WTC11 (cell line): ENCODE measurements at regions of chr1 and their contacts with region 1.

Region 1: DNA sequence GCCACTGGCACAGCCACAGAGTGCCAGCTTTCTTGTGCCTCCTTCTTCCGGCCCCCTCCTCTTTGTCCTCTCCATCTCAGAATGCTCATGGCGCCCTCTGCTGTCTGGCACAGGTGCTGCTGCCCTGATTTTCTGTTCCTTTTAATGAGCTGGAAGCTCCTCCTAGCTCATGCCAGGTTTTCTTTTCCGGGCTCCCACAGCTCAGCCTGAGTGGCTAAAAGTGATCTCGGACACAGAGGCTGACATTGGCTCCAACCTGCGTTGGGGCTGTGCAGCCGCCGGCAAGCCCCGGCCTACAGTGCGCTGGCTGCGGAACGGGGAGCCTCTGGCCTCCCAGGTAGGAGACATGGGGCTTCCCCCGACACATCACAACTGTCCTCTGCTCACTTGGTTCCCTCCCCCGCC is 18.7 kb downstream of the CNTN2 start:
- DNase-seq: peak; percentile 96
- ATAC-seq: peak; percentile 85
- H3K4me3 Mint-ChIP-seq: no peak overlapping the region
- H3K27ac Mint-ChIP-seq: no peak overlapping the region
- H3K4me1 Mint-ChIP-seq: peaks cover 9% of the 10 kb centered on the region; the same call in 1 of the 2 replicates
- H3K27me3 Mint-ChIP-seq: no peaks in the 10 kb centered on the region
- CTCF ChIP-seq: peak; percentile 84

Region 2: DNA sequence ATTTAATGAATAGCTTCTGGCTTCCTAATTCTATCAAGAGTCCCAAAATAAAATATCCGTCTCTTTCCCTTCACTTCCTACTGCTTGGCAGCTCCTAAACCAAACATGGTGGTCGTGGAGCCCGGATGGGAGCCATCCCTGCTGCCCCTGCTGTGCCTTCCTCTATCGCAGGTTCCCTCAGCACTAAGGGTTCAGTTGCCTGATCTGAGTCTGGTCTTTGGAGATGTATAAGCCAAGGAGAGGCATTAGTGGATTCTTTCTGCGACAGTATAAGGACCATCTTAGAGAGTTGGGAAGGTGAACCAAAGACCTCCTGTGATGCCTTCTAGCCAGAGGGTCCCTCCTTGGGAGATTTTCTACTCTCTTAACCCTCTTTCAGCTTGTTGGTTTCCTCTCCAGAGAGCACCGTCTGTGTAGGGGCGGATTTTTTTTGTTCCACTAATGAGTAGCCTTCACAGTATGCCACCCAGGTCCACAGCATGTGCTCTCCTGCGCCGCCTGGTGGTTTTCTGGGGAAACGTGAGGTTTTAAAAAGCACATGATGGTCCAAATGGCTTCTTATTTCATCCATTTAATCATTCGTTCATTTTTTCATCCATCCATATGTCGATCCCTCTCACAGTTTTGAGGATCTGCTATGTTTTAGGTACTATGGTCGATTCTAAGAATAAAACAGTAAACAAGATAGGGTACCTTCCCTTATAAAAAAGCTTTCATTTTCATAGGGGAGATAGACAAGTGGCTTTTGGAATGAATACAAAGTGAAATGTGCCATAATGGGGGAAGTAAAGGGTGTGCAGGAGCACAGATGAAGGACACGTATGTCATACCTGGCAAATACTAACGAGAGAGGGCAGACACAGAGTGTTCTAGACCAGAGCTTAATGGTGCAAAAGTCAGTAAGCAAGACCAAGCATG is 120.0 kb before region 1 on chr1:
- CTCF ChIA-PET with region 1: interaction called, 16 read pairs
- POLR2A ChIA-PET with region 1: no interaction called
- DNase-seq: peak; percentile 86
- ATAC-seq: peak; percentile 92
- H3K4me3 Mint-ChIP-seq: no peak overlapping the region
- H3K27ac Mint-ChIP-seq: no peak overlapping the region
- H3K4me1 Mint-ChIP-seq: peaks cover 7% of the 10 kb centered on the region; the same call in 1 of the 2 replicates
- H3K27me3 Mint-ChIP-seq: no peaks in the 10 kb centered on the region
- CTCF ChIP-seq: peak; percentile 93

Region 3: DNA sequence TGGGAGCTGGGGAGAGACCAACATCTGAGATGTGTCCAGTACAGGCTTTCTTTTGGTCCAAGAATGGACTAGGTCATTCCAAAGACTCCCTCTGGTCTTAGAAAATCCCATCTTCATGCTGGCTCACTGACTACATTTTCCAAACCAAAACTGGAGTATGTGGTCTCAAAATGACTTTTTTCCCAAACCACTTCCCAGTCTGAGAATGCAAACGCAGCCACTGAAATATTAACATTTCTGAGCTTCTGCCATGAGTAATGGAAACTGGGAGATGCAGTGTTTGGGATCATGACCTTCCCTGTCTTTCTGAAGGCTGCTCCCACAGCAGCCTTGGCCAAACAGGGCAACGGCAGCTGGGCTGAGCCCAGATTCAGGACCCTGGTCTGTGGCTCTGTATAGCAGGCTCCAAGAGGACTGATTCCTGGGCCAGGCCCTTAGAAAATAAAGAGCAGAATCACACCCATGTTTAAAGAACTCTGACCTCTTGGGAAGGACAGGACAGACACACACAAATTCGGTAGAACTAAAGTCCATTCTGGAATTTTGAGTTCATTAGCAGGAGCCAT is 80.7 kb before region 1 on chr1:
- CTCF ChIA-PET with region 1: interaction called, 72 read pairs
- POLR2A ChIA-PET with region 1: no interaction called
- DNase-seq: no peak
- ATAC-seq: no peak
- H3K4me3 Mint-ChIP-seq: no peak overlapping the region
- H3K27ac Mint-ChIP-seq: no peak overlapping the region
- H3K4me1 Mint-ChIP-seq: no peaks in the 10 kb centered on the region
- H3K27me3 Mint-ChIP-seq: no peaks in the 10 kb centered on the region
- CTCF ChIP-seq: no peak

Region 4: GRCh38 chr1:205032508-205032907 is 29.2 kb before region 1 on chr1:
- CTCF ChIA-PET with region 1: interaction called, 90 read pairs
- POLR2A ChIA-PET with region 1: no interaction called
- DNase-seq: no peak
- ATAC-seq: no peak
- H3K4me3 Mint-ChIP-seq: no peak overlapping the region
- H3K27ac Mint-ChIP-seq: no peak overlapping the region
- H3K4me1 Mint-ChIP-seq: peaks cover 5% of the 10 kb centered on the region
- H3K27me3 Mint-ChIP-seq: peaks cover 7% of the 10 kb centered on the region
- CTCF ChIP-seq: no peak

Region 5: DNA sequence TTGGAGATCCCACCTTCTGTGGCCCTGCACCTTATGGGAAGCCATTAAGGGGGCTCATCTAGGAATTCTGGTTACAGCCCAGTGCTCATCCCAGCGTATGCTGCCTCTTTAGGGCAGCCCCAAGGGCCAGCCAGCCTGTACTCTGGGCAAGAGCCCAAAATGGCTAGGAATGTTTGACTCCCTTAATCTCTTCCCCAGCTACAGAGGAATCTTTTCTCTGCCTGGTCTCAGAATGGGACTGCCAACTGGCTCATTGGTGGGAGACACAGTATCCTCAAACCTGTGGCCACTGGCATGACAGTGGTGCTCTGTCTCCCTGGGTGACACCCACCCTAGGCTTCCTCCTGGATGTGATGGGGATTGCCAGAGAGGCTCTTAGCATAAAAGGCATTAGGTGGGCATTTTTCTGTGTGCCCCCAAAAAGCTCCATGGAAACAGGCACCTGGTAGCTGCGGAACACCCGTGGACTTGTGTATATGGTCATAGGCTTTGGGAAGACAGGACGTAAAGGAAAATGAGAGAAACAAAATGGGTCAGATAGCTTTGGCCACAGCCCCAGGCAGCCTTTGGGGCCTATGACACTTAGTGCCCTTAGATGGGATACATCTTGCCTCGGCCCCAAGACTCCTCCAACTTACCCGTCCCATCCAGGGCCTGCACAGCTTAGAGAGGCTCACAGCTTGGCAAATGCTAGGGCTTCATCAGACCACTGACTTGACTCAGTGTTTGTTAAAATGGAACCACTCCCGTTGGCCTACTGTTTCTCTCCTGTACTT is 15.7 kb after region 1 on chr1:
- CTCF ChIA-PET with region 1: interaction called, 109 read pairs
- POLR2A ChIA-PET with region 1: no interaction called
- DNase-seq: no peak
- ATAC-seq: no peak
- H3K4me3 Mint-ChIP-seq: no peak overlapping the region
- H3K27ac Mint-ChIP-seq: no peak overlapping the region
- H3K4me1 Mint-ChIP-seq: no peaks in the 10 kb centered on the region
- H3K27me3 Mint-ChIP-seq: no peaks in the 10 kb centered on the region
- CTCF ChIP-seq: no peak

Region 6: DNA sequence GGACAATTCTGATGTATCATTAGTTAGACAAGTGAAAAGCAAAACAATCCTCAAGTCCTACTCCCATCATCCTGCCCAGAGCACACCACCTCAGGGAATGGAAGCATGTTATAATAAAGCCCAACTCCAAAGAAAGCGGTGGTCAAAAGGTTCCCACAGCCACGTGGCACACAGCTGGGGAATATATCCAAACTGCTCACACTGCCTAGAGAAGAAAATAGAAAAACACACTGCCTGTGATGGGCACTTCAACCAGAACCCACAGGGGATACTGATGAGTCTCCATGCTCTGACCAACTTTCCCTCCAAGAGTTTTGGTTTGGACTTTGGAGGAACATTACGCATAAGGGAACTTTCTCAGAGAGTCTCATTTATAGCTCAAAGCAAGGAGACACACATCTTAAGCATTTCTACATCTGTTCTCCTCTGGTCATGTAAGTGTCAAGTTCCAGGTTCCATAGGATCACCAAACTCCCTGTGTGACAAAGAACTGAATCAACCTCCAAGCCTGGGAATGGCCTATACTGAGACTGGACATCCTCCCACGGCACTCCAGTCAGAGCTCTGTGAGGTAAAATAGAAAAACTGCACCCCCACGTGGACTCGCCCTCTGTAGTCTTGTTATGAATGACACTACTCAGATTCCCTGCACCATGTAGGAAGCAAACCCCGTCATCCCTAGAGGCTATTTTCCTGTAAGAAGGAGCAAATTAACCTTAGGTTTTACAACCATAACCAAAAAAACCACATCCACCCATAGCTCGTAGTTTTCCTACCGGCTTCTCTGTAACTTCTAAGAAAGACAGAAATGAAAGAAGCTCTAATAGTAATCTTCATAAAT is 137.6 kb after region 1 on chr1:
- CTCF ChIA-PET with region 1: interaction called, 10 read pairs
- POLR2A ChIA-PET with region 1: no interaction called
- DNase-seq: no peak
- ATAC-seq: no peak
- H3K4me3 Mint-ChIP-seq: no peak overlapping the region
- H3K27ac Mint-ChIP-seq: peak overlapping the region; percentile 36; the same call in 1 of the 2 replicates
- H3K4me1 Mint-ChIP-seq: peaks cover 59% of the 10 kb centered on the region
- H3K27me3 Mint-ChIP-seq: no peaks in the 10 kb centered on the region
- CTCF ChIP-seq: no peak

Region 7: DNA sequence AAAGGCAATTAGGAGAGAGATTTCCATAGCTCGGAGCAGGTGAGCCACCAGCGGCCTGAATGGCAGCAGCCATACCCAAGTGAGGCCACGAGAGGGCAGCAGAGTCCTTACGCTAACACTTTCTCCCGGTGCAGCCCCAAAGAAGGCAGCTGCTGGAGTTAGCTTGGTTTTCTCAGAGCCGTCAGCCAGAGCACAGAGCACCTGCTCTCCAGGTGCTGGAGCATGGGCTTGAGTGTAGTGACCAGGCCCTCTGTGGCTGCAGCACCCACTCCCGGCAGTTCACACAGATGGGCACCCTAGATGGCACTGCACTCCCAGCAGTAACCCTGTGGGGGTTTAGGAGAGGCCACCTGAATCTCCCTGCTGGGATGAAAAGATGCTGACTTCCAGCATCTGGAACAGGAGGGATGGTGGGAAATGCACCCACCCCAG is 211.9 kb after region 1 on chr1:
- CTCF ChIA-PET with region 1: interaction called, 14 read pairs
- POLR2A ChIA-PET with region 1: no interaction called
- DNase-seq: peak; percentile 95
- ATAC-seq: peak; percentile 78
- H3K4me3 Mint-ChIP-seq: no peak overlapping the region
- H3K27ac Mint-ChIP-seq: peak overlapping the region; percentile 83
- H3K4me1 Mint-ChIP-seq: peaks cover 17% of the 10 kb centered on the region
- H3K27me3 Mint-ChIP-seq: no peaks in the 10 kb centered on the region
- CTCF ChIP-seq: peak; percentile 97